ENCODE measurements at regions of chr2 and their contacts with region 1.

Region 1: GRCh38 chr2:12716282-12717190 is at the start of gene TRIB2:
- DNase-seq: peak; percentile 78 to 90 (median 88)
- ATAC-seq: peak; percentile 88
- H3K4me3 ChIP-seq: peak within 1 kb of the TSS; percentile 86
- H3K4me3 Mint-ChIP-seq: peak within 1 kb of the TSS; percentile 88 to 100 (median 99)
- H3K27ac ChIP-seq: peak within 1 kb of the TSS; percentile 88
- H3K27ac Mint-ChIP-seq: peak within 1 kb of the TSS; percentile 93 to 97 (median 96)
- H3K4me1 ChIP-seq: peaks cover 10 to 18% of the 10 kb centered on the region in 2 donors
- H3K4me1 Mint-ChIP-seq: peaks cover 32 to 65% (median 56%) of the 10 kb centered on the region in 7 donors
- H3K27me3 ChIP-seq: no peaks in the 10 kb centered on the region
- H3K27me3 Mint-ChIP-seq: peaks cover 0 to 15% (median 0%) of the 10 kb centered on the region in 5 donors
- total RNA-seq, gene TRIB2: 63.1 to 125 (median 110) TPM

Region 2: DNA sequence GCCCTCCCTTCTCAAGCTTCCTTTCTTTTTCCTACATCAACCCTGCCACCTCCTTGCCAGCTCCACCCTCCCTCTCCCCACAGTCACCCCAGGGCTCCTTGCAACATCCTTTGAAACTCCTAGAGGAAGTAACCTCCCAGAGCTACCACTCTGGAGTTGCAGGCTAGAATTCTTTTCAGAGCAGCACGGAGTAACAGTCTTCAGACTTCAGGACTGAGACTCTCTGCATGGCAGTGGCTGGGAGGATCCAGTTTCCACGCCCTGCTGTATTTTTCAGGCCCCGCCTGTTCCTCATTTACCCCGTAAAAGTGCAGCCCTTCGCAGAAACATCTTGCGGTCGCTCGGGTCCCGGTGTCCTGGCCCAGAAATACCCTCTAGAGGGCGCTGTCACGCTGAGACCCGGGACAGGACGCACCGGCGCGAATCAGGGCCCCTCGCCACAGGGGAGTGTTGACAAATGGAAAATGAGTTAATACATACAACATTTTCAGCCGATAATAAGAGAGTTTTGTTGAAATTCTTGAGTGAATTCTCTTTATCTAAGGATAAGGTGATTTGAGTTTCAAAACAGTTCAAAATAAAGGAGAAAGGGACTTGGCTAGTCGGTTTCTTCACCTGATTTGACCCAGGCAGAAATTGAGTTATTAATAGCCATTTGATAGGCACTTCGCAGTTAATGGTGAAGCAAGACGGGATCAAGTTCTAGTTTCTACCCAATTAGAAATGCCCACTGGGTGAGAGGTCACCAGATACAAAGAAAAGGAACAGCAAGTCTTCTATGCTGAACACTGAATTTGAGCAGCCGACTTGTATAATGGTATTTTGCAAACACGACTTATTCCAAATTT is 1028.1 kb before region 1 on chr2:
- CTCF ChIA-PET with region 1: interaction called, 3 read pairs
- POLR2A ChIA-PET with region 1: no interaction called
- intact Hi-C with region 1: loop called (anchors 1 to 10 kb)
- DNase-seq: peak; percentile 62 to 82 (median 72)
- ATAC-seq: peak; percentile 93
- H3K4me3 ChIP-seq: peak overlapping the region; percentile 25
- H3K4me3 Mint-ChIP-seq: peak overlapping the region; percentile 25 to 73 (median 54)
- H3K27ac ChIP-seq: no peak overlapping the region
- H3K27ac Mint-ChIP-seq: peak overlapping the region in 2 of 9 donors; percentile 38 to 77
- H3K4me1 ChIP-seq: peaks cover 3 to 7% of the 10 kb centered on the region in 2 donors
- H3K4me1 Mint-ChIP-seq: peaks cover 7 to 19% (median 13%) of the 10 kb centered on the region in 7 donors
- H3K27me3 ChIP-seq: no peaks in the 10 kb centered on the region
- H3K27me3 Mint-ChIP-seq: peaks cover 0 to 21% (median 5%) of the 10 kb centered on the region in 5 donors

Region 3: DNA sequence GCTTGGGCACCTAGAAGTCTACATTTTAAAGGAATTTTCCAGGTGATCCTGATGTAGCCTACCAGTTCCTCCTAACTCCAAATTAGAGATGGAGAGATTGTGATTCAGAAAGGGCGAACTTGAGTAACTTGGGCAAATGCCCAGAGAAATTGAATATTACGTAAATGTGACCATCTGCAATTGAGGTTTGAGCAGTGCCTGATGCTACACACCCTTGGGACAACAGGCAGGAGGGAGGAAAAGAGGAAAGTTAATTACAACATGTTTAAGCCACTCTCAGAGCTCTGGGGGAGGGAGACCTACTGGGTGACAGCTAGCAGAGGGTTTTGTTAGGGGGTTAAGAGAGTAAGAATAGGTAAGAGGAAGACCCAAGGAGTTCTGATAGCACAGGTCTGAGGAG is 761.2 kb before region 1 on chr2:
- CTCF ChIA-PET with region 1: no interaction called
- POLR2A ChIA-PET with region 1: no interaction called
- intact Hi-C with region 1: loop called in 1 of 2 experiments (anchors 1 kb)
- DNase-seq: no peak
- ATAC-seq: no peak
- H3K4me3 ChIP-seq: no peak overlapping the region
- H3K4me3 Mint-ChIP-seq: no peak overlapping the region
- H3K27ac ChIP-seq: no peak overlapping the region
- H3K27ac Mint-ChIP-seq: peak overlapping the region in 1 of 9 donors; percentile 32
- H3K4me1 ChIP-seq: peaks cover 0 to 5% of the 10 kb centered on the region in 2 donors
- H3K4me1 Mint-ChIP-seq: peaks cover 0 to 10% (median 9%) of the 10 kb centered on the region in 7 donors
- H3K27me3 ChIP-seq: no peaks in the 10 kb centered on the region
- H3K27me3 Mint-ChIP-seq: peaks cover 0 to 41% (median 14%) of the 10 kb centered on the region in 5 donors

Region 4: GRCh38 chr2:12127638-12128037 is 588.9 kb before region 1 on chr2:
- CTCF ChIA-PET with region 1: interaction called, 10 read pairs
- POLR2A ChIA-PET with region 1: interaction called, 4 read pairs
- intact Hi-C with region 1: loop called (anchors 1 to 2 kb)
- DNase-seq: peak in 6 of 9 donors; percentile 40 to 63 (median 56)
- ATAC-seq: peak; percentile 80
- H3K4me3 ChIP-seq: peak overlapping the region; percentile 10
- H3K4me3 Mint-ChIP-seq: peak overlapping the region in 5 of 10 donors; percentile 34 to 90 (median 73)
- H3K27ac ChIP-seq: peak overlapping the region; percentile 63
- H3K27ac Mint-ChIP-seq: peak overlapping the region in 3 of 9 donors; percentile 84 to 95 (median 87)
- H3K4me1 ChIP-seq: peaks cover 22 to 61% of the 10 kb centered on the region in 2 donors
- H3K4me1 Mint-ChIP-seq: peaks cover 0 to 22% (median 0%) of the 10 kb centered on the region in 7 donors
- H3K27me3 ChIP-seq: no peaks in the 10 kb centered on the region
- H3K27me3 Mint-ChIP-seq: no peaks in the 10 kb centered on the region

Region 5: GRCh38 chr2:12326449-12327190 is 389.9 kb before region 1 on chr2:
- CTCF ChIA-PET with region 1: interaction called, 9 read pairs
- POLR2A ChIA-PET with region 1: interaction called, 4 read pairs
- intact Hi-C with region 1: loop called in 1 of 2 experiments (anchors 5 kb)
- DNase-seq: peak in 5 of 9 donors; percentile 15 to 31 (median 18)
- ATAC-seq: peak; percentile 41
- H3K4me3 ChIP-seq: no peak overlapping the region
- H3K4me3 Mint-ChIP-seq: no peak overlapping the region
- H3K27ac ChIP-seq: no peak overlapping the region
- H3K27ac Mint-ChIP-seq: peak overlapping the region in 1 of 9 donors; percentile 2
- H3K4me1 ChIP-seq: no peaks in the 10 kb centered on the region
- H3K4me1 Mint-ChIP-seq: peaks cover 3 to 18% (median 10%) of the 10 kb centered on the region in 7 donors
- H3K27me3 ChIP-seq: no peaks in the 10 kb centered on the region
- H3K27me3 Mint-ChIP-seq: peaks cover 0 to 17% (median 3%) of the 10 kb centered on the region in 5 donors

Region 6: DNA sequence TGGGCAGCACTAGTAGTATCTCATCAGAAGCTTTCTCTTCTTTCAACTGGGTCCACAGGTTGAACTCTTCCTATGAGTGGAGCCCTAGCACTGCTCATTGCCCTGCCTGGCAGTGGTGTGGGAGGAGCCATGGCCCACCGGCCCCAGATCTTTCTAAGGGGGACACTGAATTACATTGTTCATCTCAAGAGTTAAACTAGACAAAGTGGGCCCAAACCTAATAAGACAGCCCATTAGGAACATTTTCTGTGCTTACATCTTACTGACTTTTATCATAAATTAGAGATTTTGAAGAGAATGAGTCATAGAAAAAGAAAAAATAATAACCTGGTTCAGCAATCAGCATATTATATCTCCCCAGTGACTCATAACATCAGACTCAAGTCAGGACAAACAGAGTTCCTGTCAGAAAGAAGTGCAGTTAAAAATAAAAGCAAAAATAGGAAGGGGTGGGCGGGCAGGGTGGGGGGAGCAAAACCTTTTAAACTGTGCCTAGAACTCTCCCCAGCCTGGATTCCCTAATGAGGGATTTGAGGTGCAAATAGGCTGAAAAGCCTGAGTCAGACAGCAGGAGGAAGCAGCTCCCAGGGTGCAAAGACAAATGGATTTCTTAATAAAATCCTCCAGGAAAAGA is 161.4 kb before region 1 on chr2:
- CTCF ChIA-PET with region 1: interaction called, 4 read pairs
- POLR2A ChIA-PET with region 1: interaction called, 3 read pairs
- intact Hi-C with region 1: loop called in 1 of 2 experiments (anchors 1 kb)
- DNase-seq: peak in 1 of 9 donors; percentile 32
- ATAC-seq: peak; percentile 27
- H3K4me3 ChIP-seq: no peak overlapping the region
- H3K4me3 Mint-ChIP-seq: peak overlapping the region in 7 of 10 donors; percentile 5 to 66 (median 26)
- H3K27ac ChIP-seq: no peak overlapping the region
- H3K27ac Mint-ChIP-seq: peak overlapping the region in 8 of 9 donors; percentile 36 to 89 (median 74)
- H3K4me1 ChIP-seq: peaks cover 8 to 26% of the 10 kb centered on the region in 2 donors
- H3K4me1 Mint-ChIP-seq: peaks cover 25 to 62% (median 43%) of the 10 kb centered on the region in 7 donors
- H3K27me3 ChIP-seq: no peaks in the 10 kb centered on the region
- H3K27me3 Mint-ChIP-seq: no peaks in the 10 kb centered on the region

Region 7: GRCh38 chr2:12579018-12579417 is 137.5 kb before region 1 on chr2:
- CTCF ChIA-PET with region 1: no interaction called
- POLR2A ChIA-PET with region 1: no interaction called
- intact Hi-C with region 1: no loop called
- DNase-seq: no peak
- ATAC-seq: no peak
- H3K4me3 ChIP-seq: no peak overlapping the region
- H3K4me3 Mint-ChIP-seq: no peak overlapping the region
- H3K27ac ChIP-seq: no peak overlapping the region
- H3K27ac Mint-ChIP-seq: no peak overlapping the region
- H3K4me1 ChIP-seq: no peaks in the 10 kb centered on the region
- H3K4me1 Mint-ChIP-seq: peaks cover 0 to 16% (median 7%) of the 10 kb centered on the region in 7 donors
- H3K27me3 ChIP-seq: no peaks in the 10 kb centered on the region
- H3K27me3 Mint-ChIP-seq: peaks cover 0 to 8% (median 0%) of the 10 kb centered on the region in 5 donors

Region 8: GRCh38 chr2:12658310-12658945 is 58.1 kb before region 1 on chr2:
- CTCF ChIA-PET with region 1: no interaction called
- POLR2A ChIA-PET with region 1: no interaction called
- intact Hi-C with region 1: no loop called
- DNase-seq: peak in 1 of 9 donors; percentile 7
- ATAC-seq: no peak
- H3K4me3 ChIP-seq: no peak overlapping the region
- H3K4me3 Mint-ChIP-seq: peak overlapping the region in 2 of 10 donors; percentile 3 to 8
- H3K27ac ChIP-seq: no peak overlapping the region
- H3K27ac Mint-ChIP-seq: peak overlapping the region in 4 of 9 donors; percentile 0 to 49 (median 36)
- H3K4me1 ChIP-seq: peaks cover 0 to 9% of the 10 kb centered on the region in 2 donors
- H3K4me1 Mint-ChIP-seq: peaks cover 8 to 36% (median 22%) of the 10 kb centered on the region in 7 donors
- H3K27me3 ChIP-seq: no peaks in the 10 kb centered on the region
- H3K27me3 Mint-ChIP-seq: peaks cover 0 to 3% (median 0%) of the 10 kb centered on the region in 5 donors

Region 9: DNA sequence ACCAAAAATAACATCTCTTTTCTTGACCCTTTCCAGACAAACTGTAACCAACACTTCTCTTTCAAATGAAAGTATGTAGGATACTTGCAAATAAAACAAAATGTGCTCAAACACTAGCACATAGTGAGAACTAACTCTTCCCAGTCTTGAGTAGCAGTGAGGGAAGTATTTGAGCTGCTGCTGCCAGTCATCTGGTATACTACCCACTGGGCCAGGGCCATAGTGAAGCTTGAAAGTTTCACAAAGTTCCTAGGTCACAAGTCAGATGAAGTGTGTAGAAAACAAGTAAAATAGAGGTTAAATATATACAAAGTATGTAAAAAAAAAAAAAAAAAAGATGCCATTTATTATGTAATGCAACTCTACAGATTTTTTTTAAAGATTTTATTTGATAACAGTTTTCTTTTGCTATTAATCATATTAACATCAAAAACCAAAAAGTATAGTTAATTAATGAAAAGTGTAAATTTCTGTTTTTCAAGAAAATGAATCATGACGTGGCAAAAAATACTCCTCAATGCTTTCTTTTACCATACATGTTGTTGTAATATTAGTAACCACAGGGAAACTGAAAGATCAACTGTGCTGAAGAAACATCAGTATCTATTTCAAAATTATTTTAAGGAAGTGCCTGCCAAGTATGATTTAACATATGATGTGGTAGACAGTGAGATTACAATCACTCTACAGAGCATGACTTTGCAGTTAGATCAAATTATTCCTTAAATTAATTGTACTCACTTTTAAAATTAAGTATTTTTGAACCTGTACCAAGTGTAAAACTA is 21.4 kb before region 1 on chr2:
- CTCF ChIA-PET with region 1: no interaction called
- POLR2A ChIA-PET with region 1: no interaction called
- intact Hi-C with region 1: no loop called
- DNase-seq: no peak
- ATAC-seq: peak; percentile 72
- H3K4me3 ChIP-seq: no peak overlapping the region
- H3K4me3 Mint-ChIP-seq: no peak overlapping the region
- H3K27ac ChIP-seq: no peak overlapping the region
- H3K27ac Mint-ChIP-seq: no peak overlapping the region
- H3K4me1 ChIP-seq: no peaks in the 10 kb centered on the region
- H3K4me1 Mint-ChIP-seq: peaks cover 0 to 11% (median 0%) of the 10 kb centered on the region in 7 donors
- H3K27me3 ChIP-seq: no peaks in the 10 kb centered on the region
- H3K27me3 Mint-ChIP-seq: peaks cover 0 to 21% (median 0%) of the 10 kb centered on the region in 5 donors

Measured in naive thymus-derived CD4-positive, alpha-beta T cell (primary cell).